ENCODE measurements at regions of chr4 and their contacts with region 1.

Region 1: DNA sequence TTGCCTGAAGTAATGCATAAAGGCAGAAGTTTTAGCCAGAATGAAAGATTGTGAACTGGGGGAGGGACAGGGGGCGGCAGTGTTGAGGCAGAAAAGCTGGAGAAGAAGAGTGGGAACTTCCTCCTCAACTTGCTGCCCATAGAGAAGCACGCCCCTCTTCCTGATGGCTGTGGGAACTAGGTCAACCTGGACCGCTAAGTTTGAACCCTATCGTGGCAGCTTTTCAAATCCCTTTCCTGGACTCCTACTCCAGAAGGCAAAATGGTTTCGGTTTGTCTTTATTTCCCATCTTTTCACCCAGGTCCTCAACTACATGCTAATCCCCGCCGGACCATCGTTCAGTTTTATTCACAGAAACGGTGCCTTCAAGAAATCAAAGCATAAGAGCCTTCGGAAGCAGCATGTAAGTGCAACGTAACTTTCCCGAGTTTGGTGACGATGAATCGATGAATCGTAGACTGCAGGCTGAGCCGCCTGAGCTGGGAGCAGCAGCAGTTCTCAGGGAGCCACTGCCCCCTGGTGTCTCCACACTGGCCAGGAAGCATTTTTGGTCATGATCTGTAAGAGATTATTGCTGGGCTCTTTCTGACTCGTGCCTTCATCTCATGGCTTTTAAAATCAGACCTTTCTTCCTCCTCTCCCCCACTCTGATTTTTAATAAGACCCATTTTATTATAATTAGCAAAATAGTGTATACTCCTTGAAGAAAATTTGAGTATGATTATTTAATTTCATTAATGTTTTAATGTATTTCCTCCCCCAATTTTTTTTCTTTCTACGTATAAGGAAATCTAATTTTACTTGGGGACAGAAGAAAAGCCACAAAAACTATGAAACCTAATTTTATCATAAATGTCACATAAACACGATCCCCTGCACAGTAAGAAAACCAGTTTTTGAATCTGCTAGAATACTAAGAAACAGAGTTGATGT is 21.4 kb downstream of the SPINK2 start:
- DNase-seq: peak; percentile 89
- H3K4me3 Mint-ChIP-seq: peak overlapping the region; percentile 88
- H3K27ac Mint-ChIP-seq: peak overlapping the region; percentile 50
- H3K4me1 Mint-ChIP-seq: peaks cover 30% of the 10 kb centered on the region
- H3K27me3 Mint-ChIP-seq: peaks cover 15% of the 10 kb centered on the region

Region 2: GRCh38 chr4:56575820-56576429 is 224.2 kb before region 1 on chr4:
- CTCF ChIA-PET with region 1: interaction called, 19 read pairs
- POLR2A ChIA-PET with region 1: no interaction called
- DNase-seq: no peak
- H3K4me3 Mint-ChIP-seq: no peak overlapping the region
- H3K27ac Mint-ChIP-seq: no peak overlapping the region
- H3K4me1 Mint-ChIP-seq: peaks cover 5% of the 10 kb centered on the region
- H3K27me3 Mint-ChIP-seq: peaks cover 15% of the 10 kb centered on the region

Region 3: GRCh38 chr4:56757821-56758411 is 42.2 kb before region 1 on chr4:
- CTCF ChIA-PET with region 1: interaction called, 10 read pairs
- POLR2A ChIA-PET with region 1: interaction called, 3 read pairs
- DNase-seq: peak; percentile 82
- H3K4me3 Mint-ChIP-seq: peak overlapping the region; percentile 63
- H3K27ac Mint-ChIP-seq: peak overlapping the region; percentile 97
- H3K4me1 Mint-ChIP-seq: peaks cover 47% of the 10 kb centered on the region
- H3K27me3 Mint-ChIP-seq: peaks cover 7% of the 10 kb centered on the region

Region 4: GRCh38 chr4:56786955-56787354 is 13.1 kb before region 1 on chr4:
- CTCF ChIA-PET with region 1: no interaction called
- POLR2A ChIA-PET with region 1: no interaction called
- DNase-seq: no peak
- H3K4me3 Mint-ChIP-seq: no peak overlapping the region
- H3K27ac Mint-ChIP-seq: no peak overlapping the region
- H3K4me1 Mint-ChIP-seq: no peaks in the 10 kb centered on the region
- H3K27me3 Mint-ChIP-seq: peaks cover 5% of the 10 kb centered on the region

Measured in activated CD4-positive, alpha-beta memory T cell treated with anti-CD3 and anti-CD28 coated beads, Interleukin-2, amount 10 ng/mL, durations not matched to agents 7 days and 5 days (primary cell).